Right lobe of liver (tissue), 6 donors: ENCODE measurements at regions of chr9 and their contacts with region 1.

Region 1: GRCh38 chr9:129333953-129334724 is 156.1 kb upstream of the IER5L start:
- DNase-seq: peak; percentile 92 to 95 (median 94)
- ATAC-seq: peak; percentile 76 to 89 (median 88)
- H3K4me3 ChIP-seq: peak overlapping the region in 2 of 3 donors; percentile 29 to 34
- H3K27ac ChIP-seq: peak overlapping the region; percentile 83 to 91 (median 89)
- H3K4me1 ChIP-seq: peaks cover 0 to 30% (median 17%) of the 10 kb centered on the region in 4 donors
- H3K27me3 ChIP-seq: no peaks in the 10 kb centered on the region
- CTCF ChIP-seq: peak in 2 of 4 donors; percentile 3 to 7
- POLR2A ChIP-seq: peak; percentile 65

Region 2: DNA sequence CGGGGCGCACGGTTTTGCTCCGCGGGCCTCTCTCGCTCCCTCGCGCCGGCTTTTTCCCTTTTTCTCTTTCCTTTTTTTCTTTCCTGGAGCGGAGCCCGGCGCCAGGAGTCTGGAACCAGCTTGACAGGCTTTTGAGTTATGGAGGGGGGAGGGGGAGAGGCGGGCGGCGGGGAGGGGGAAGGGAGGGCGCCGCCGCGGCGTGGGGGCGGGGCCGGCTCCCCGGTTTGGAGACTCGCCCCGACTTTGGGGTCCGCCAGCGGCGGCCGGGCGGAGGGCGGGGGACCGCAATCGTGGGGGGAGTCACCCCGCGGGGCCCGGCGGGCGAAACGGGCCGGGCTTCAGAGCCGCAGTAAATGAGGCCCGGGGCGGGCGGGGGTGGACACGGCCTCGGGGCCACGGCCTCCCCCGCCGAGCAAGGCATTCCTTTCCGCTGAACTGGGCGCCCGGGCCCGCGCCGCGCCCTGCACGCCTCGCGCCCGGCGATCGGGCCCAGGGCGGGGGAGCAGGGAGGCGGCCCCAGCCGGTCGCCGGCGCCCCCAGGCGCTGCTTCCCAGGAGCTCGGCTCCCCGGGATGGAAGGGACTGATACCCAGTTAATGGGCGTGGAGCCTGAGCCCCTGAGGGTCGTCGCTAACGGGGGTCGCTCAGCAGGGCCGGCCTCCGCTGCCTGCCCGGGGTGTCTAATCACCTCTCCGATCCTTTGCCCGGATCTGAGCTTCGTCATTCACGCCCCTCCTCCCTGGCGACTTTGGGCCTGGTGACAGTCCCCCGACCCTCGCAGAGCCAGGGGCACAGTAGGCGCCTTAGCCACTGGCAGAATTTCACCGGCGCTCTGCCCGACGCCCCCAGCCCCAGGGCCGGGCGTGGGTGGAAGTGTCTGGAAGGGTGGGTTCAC is 148.6 kb after region 1 on chr9:
- intact Hi-C with region 1: loop called in 1 of 2 experiments (anchors 10 kb)
- DNase-seq: peak; percentile 85 to 91 (median 87)
- ATAC-seq: peak; percentile 40 to 72 (median 66)
- H3K4me3 ChIP-seq: peak overlapping the region; percentile 20 to 58 (median 49)
- H3K27ac ChIP-seq: peak overlapping the region; percentile 99 to 100 (median 99)
- H3K4me1 ChIP-seq: peaks cover 5 to 43% (median 23%) of the 10 kb centered on the region in 4 donors
- H3K27me3 ChIP-seq: no peaks in the 10 kb centered on the region
- CTCF ChIP-seq: no peak
- POLR2A ChIP-seq: peak; percentile 71

Region 3: GRCh38 chr9:129536041-129536440 is 201.9 kb after region 1 on chr9:
- intact Hi-C with region 1: no loop called
- DNase-seq: no peak
- ATAC-seq: no peak
- H3K4me3 ChIP-seq: no peak overlapping the region
- H3K27ac ChIP-seq: no peak overlapping the region
- H3K4me1 ChIP-seq: no peaks in the 10 kb centered on the region
- H3K27me3 ChIP-seq: no peaks in the 10 kb centered on the region
- CTCF ChIP-seq: no peak
- POLR2A ChIP-seq: no peak

Region 4: GRCh38 chr9:129569502-129570449 is 235.6 kb after region 1 on chr9:
- intact Hi-C with region 1: loop called in 1 of 2 experiments (anchors 10 kb)
- DNase-seq: no peak
- ATAC-seq: peak; percentile 14 to 19 (median 16)
- H3K4me3 ChIP-seq: peak overlapping the region; percentile 40 to 63 (median 62)
- H3K27ac ChIP-seq: peak overlapping the region; percentile 83 to 94 (median 84)
- H3K4me1 ChIP-seq: peaks cover 0 to 34% (median 9%) of the 10 kb centered on the region in 4 donors
- H3K27me3 ChIP-seq: no peaks in the 10 kb centered on the region
- CTCF ChIP-seq: peak; percentile 22 to 40 (median 36)
- POLR2A ChIP-seq: no peak